ENCODE measurements at regions of chr20 and their contacts with region 1.

Region 1: GRCh38 chr20:52318651-52319050 is 127.1 kb upstream of the ZFP64 start:
- DNase-seq: no peak
- H3K4me3 ChIP-seq: no peak overlapping the region
- H3K27ac ChIP-seq: no peak overlapping the region
- H3K4me1 ChIP-seq: no peaks in the 10 kb centered on the region
- H3K27me3 ChIP-seq: no peaks in the 10 kb centered on the region
- CTCF ChIP-seq: no peak
- POLR2A ChIP-seq: no peak

Region 2: GRCh38 chr20:53224851-53225250 is 906.2 kb after region 1 on chr20:
- intact Hi-C with region 1: loop called (anchors 5 kb)
- DNase-seq: no peak
- H3K4me3 ChIP-seq: no peak overlapping the region
- H3K27ac ChIP-seq: no peak overlapping the region
- H3K4me1 ChIP-seq: no peaks in the 10 kb centered on the region
- H3K27me3 ChIP-seq: no peaks in the 10 kb centered on the region
- CTCF ChIP-seq: no peak
- POLR2A ChIP-seq: no peak

Measured in prostate gland (tissue), 2 donors.